Left ventricle myocardium inferior (tissue), 1 donor: ENCODE measurements at regions of chr16 and their contacts with region 1.

Region 1: GRCh38 chr16:22272870-22273595 is 24.2 kb upstream of the POLR3E start:
- DNase-seq: no peak
- H3K4me3 ChIP-seq: no peak overlapping the region
- H3K27ac ChIP-seq: peak overlapping the region; percentile 51
- H3K4me1 ChIP-seq: peaks cover 10% of the 10 kb centered on the region
- H3K27me3 ChIP-seq: no peaks in the 10 kb centered on the region
- CTCF ChIP-seq: no peak

Region 2: GRCh38 chr16:22220069-22220440 is 53.0 kb before region 1 on chr16:
- intact Hi-C with region 1: loop called (anchors 10 kb)
- DNase-seq: peak; percentile 80
- H3K4me3 ChIP-seq: peak overlapping the region; percentile 24
- H3K27ac ChIP-seq: peak overlapping the region; percentile 78
- H3K4me1 ChIP-seq: peaks cover 61% of the 10 kb centered on the region
- H3K27me3 ChIP-seq: no peaks in the 10 kb centered on the region
- CTCF ChIP-seq: no peak

Region 3: DNA sequence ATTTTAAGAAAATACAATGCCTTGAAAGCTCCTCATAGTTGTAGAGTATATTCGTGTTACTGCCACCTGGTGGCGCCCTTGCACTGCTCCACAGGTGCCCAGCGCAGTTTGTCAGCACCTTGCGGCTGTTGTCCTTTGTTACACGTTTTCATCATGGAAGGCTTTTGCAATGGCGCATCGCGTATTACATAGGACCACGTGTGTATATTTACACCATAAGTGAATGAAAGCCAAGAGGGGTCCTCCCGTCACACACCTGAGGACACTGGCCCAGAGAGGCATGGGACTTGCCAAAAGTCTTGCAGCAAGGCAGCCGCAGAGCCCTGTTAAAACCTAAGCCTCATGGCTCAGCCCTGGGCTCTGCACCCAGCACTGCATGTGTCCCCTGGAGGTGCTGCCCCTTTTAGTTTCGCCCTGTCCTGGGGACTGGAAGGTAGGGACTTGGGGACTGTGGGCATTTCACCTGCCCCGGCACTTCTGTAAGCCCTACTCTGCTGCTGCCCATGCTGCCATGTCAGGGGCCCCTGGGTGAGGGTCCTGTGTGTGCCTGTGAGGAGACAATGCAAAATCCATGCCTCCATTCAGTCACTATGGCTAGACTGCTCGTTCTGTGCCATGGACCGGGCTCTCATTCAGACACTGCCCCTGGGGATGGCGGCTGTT is 48.4 kb after region 1 on chr16:
- intact Hi-C with region 1: no loop called
- DNase-seq: peak; percentile 61
- H3K4me3 ChIP-seq: no peak overlapping the region
- H3K27ac ChIP-seq: no peak overlapping the region
- H3K4me1 ChIP-seq: peaks cover 6% of the 10 kb centered on the region
- H3K27me3 ChIP-seq: no peaks in the 10 kb centered on the region
- CTCF ChIP-seq: peak; percentile 90

Region 4: GRCh38 chr16:22743401-22743800 is 470.4 kb after region 1 on chr16:
- intact Hi-C with region 1: no loop called
- DNase-seq: no peak
- H3K4me3 ChIP-seq: no peak overlapping the region
- H3K27ac ChIP-seq: no peak overlapping the region
- H3K4me1 ChIP-seq: no peaks in the 10 kb centered on the region
- H3K27me3 ChIP-seq: peaks cover 20% of the 10 kb centered on the region
- CTCF ChIP-seq: no peak